WTC11 (cell line): ENCODE measurements at regions of chr9 and their contacts with region 1.

Region 1: DNA sequence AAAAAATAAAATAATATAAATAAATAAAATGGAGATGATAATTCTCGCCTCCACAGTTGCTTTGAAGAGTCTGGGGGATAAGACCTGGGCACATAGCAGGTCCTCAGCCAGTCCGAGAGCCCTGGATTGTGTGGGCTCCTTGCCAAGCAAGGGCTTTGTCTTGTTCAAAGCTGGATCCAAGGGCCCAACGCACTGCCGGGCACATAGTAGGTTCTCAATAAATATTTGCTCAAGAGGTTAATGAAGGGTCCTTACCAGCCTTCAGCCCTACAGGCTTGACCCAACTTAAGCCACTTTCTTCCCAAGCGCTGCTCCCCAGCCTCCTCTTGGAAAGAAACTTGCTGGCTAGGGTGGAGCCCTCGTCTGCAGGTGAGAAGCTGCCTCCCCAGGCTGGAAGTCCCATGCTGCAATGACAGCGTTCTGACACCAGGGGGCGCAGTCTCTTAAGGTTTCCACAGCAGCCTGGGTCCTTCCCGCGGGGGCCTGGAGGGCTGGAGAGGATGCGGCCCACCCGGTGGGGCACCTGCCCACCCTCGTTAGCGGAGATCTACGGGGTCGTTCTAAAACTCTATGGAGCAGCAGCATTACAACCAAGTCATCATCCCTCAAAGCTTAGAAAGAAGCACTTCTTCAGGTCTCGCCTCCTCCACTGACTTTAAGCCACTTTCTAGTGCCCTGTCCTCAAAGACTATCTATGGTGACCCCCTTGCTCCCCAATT is 115.2 kb downstream of the LHX2 start:
- DNase-seq: peak; percentile 92
- ATAC-seq: peak; percentile 73
- H3K4me3 Mint-ChIP-seq: no peak overlapping the region
- H3K27ac Mint-ChIP-seq: no peak overlapping the region
- H3K4me1 Mint-ChIP-seq: peaks cover 7% of the 10 kb centered on the region
- H3K27me3 Mint-ChIP-seq: no peaks in the 10 kb centered on the region; the same call in 1 of the 2 replicates
- CTCF ChIP-seq: peak; percentile 100

Region 2: GRCh38 chr9:124082622-124083021 is 44.1 kb before region 1 on chr9:
- CTCF ChIA-PET with region 1: no interaction called
- POLR2A ChIA-PET with region 1: no interaction called
- DNase-seq: no peak
- ATAC-seq: no peak
- H3K4me3 Mint-ChIP-seq: no peak overlapping the region
- H3K27ac Mint-ChIP-seq: no peak overlapping the region
- H3K4me1 Mint-ChIP-seq: peaks cover 6% of the 10 kb centered on the region
- H3K27me3 Mint-ChIP-seq: peaks cover 7% of the 10 kb centered on the region
- CTCF ChIP-seq: no peak

Region 3: GRCh38 chr9:124110307-124110915 is 16.3 kb before region 1 on chr9:
- CTCF ChIA-PET with region 1: interaction called, 16 read pairs
- POLR2A ChIA-PET with region 1: no interaction called
- DNase-seq: peak; percentile 81
- ATAC-seq: peak; percentile 91
- H3K4me3 Mint-ChIP-seq: no peak overlapping the region
- H3K27ac Mint-ChIP-seq: no peak overlapping the region
- H3K4me1 Mint-ChIP-seq: no peaks in the 10 kb centered on the region
- H3K27me3 Mint-ChIP-seq: no peaks in the 10 kb centered on the region; the same call in 1 of the 2 replicates
- CTCF ChIP-seq: no peak

Region 4: GRCh38 chr9:124228516-124228915 is 101.8 kb after region 1 on chr9:
- CTCF ChIA-PET with region 1: no interaction called
- POLR2A ChIA-PET with region 1: no interaction called
- DNase-seq: no peak
- ATAC-seq: no peak
- H3K4me3 Mint-ChIP-seq: no peak overlapping the region
- H3K27ac Mint-ChIP-seq: no peak overlapping the region
- H3K4me1 Mint-ChIP-seq: no peaks in the 10 kb centered on the region
- H3K27me3 Mint-ChIP-seq: peaks cover 3% of the 10 kb centered on the region; the same call in 1 of the 2 replicates
- CTCF ChIP-seq: no peak

Region 5: DNA sequence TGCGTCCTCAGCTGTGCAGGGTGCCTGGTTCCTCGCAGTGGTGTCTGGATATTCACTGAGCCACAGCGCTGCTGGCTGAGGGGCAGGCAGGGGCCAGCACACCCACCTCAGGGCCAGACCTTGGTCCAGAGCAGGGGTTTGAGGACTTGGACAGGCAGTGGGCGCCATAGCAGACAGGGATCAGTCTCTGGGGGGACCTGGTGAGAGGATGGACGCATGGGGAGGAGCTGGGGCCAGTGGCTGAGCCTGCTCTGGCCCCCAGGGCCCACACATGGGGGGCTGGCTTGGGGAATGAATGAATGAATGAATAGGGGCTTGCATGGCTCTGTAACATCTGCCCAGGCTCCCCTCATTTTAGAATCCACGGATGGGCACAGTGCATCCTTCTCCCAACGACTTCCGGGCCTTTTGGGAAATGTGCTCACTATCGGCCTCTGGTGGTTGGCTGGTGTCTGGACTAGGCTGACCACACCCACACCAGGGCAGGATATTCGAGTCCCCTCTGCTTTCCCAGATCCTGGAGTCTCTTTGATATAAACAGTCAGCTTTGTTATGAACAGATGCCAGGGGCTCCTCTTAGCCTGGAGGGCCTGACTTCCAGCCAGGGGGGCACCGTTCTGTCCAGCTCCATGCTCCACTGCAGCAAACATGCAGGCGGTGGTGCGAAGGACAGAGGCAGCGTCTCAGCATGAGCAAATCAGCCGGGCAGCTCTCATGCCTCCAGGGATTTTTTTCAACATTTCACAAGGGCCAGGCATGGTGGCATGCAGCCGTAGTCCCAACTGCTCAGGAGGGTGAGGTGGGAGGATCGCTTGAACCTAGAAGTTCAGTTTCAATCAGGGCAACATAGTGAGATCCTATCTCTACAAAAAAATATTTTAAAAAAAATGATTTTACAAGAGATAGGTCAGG is 193.6 kb after region 1 on chr9:
- CTCF ChIA-PET with region 1: interaction called, 46 read pairs
- POLR2A ChIA-PET with region 1: interaction called, 3 read pairs
- DNase-seq: peak; percentile 86
- ATAC-seq: peak; percentile 92
- H3K4me3 Mint-ChIP-seq: no peak overlapping the region
- H3K27ac Mint-ChIP-seq: no peak overlapping the region
- H3K4me1 Mint-ChIP-seq: 0 out of 2 replicates have a peak, but pooled peaks cover 3% of the 10 kb centered on the region
- H3K27me3 Mint-ChIP-seq: no peaks in the 10 kb centered on the region
- CTCF ChIP-seq: peak; percentile 66

Region 6: DNA sequence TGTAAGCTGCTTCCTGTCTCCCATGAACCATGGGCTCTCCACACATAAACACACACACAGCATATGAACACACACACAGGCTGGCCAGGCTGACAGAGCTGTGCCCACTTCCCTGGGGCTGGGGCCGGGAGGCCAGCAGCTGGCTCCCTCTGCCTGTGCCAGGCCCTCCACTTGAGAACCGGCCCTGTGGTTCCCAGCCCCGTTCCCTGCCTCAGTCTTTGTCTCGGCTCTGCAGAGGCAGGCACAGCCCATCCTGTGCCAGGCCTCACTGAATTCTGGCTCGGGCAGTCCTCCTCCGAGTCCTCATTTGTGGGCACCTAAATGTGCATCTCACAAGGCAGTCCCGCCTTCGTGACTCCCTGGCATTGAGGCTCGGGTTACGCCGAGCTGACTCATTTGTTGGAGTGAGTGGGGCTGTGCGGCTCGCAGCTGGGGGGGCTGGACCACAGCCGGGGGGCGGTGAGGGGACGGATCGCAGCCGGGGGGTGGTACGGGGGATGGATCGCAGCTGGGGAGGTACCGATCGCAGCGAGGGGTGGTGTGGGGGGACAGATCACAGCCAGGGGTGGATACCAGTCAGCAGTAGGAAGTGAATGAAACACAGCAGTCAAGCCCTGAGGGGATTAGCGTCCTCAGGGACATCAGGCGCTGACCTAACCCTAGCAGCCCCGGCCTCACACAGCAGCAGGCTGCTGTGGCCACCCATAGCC is 216.2 kb after region 1 on chr9:
- CTCF ChIA-PET with region 1: interaction called, 10 read pairs
- POLR2A ChIA-PET with region 1: no interaction called
- DNase-seq: no peak
- ATAC-seq: peak; percentile 44
- H3K4me3 Mint-ChIP-seq: no peak overlapping the region
- H3K27ac Mint-ChIP-seq: peak overlapping the region; percentile 7
- H3K4me1 Mint-ChIP-seq: peaks cover 13% of the 10 kb centered on the region
- H3K27me3 Mint-ChIP-seq: no peaks in the 10 kb centered on the region
- CTCF ChIP-seq: no peak